Mammary epithelial cell (primary cell): ENCODE measurements at regions of chr5 and their contacts with region 1.

Region 1: DNA sequence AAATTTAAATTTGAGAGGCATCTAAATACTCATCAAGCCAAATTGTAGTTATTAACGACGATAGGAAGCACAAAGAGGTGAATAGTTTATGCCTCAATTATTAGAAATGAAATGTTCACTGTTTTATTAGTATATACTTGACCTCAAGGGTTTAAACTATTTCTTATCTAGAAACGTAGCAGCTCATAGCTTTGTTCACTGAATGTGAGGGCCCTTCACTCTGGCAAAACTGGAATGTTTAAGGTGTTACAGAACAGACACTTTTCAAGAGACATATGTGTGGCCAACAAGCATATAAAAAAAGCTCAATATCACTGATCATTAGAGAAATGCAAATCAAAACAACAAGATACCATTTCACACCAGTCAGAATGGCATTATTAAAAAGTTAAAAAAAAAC is 151.2 kb upstream of the KCNN2 start:
- DNase-seq: no peak
- H3K4me3 ChIP-seq: no peak overlapping the region
- H3K27ac ChIP-seq: no peak overlapping the region
- H3K4me1 ChIP-seq: no peaks in the 10 kb centered on the region
- H3K27me3 ChIP-seq: no peaks in the 10 kb centered on the region
- CTCF ChIP-seq: no peak

Region 2: GRCh38 chr5:113806250-113806649 is 404.4 kb before region 1 on chr5:
- CTCF ChIA-PET with region 1: no interaction called
- dilution Hi-C with region 1: no loop called
- in situ Hi-C with region 1: no loop called
- intact Hi-C with region 1: no loop called
- DNase-seq: peak; percentile 17
- H3K4me3 ChIP-seq: no peak overlapping the region
- H3K27ac ChIP-seq: no peak overlapping the region
- H3K4me1 ChIP-seq: peaks cover 7% of the 10 kb centered on the region
- H3K27me3 ChIP-seq: no peaks in the 10 kb centered on the region
- CTCF ChIP-seq: peak; percentile 32 to 39

Region 3: GRCh38 chr5:114113604-114114003 is 97.1 kb before region 1 on chr5:
- CTCF ChIA-PET with region 1: no interaction called
- dilution Hi-C with region 1: no loop called
- in situ Hi-C with region 1: no loop called
- intact Hi-C with region 1: loop called (anchors 5 kb)
- DNase-seq: no peak
- H3K4me3 ChIP-seq: no peak overlapping the region
- H3K27ac ChIP-seq: no peak overlapping the region
- H3K4me1 ChIP-seq: no peaks in the 10 kb centered on the region
- H3K27me3 ChIP-seq: peaks cover 2% of the 10 kb centered on the region
- CTCF ChIP-seq: no peak